Left ventricle myocardium superior (tissue), 1 donor: ENCODE measurements at regions of chrX and their contacts with region 1.

Region 1: GRCh38 chrX:15564981-15565579 is 35.7 kb downstream of the ACE2 start:
- DNase-seq: peak; percentile 63
- ATAC-seq: peak; percentile 91

Region 2: DNA sequence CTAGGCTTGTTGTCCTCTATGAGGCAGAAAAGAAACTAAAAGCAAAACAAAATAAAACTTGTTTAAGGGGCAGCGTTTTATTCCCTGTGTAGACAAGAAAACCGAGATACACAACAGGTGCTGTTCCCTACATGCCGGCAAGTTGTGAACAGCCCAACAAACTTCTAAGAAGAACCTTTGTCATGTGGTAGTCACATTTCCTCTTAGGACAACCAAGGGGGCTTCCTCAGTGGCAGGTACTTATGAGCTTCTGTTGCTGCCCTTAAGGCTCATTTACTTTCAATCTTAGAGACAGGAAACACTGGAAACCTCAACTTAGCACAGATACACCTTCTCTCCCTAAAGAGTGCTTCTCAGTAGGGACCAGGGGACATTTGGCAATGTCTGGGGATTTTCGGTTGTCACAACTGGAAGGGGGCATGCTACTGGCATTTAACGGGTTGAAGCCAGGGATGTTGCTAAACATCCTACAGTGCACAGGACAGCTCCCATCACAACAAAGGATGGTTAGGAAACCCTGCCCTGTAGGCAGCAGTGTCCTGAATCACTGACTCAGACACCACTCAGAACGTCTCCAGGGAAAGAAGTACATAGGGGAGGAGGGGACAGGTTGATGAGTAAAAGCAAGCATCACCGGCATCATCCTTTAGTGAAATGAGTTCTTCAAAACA is 406.2 kb before region 1 on chrX:
- intact Hi-C with region 1: no loop called
- DNase-seq: no peak
- ATAC-seq: no peak

Region 3: GRCh38 chrX:15493118-15493962 is 71.7 kb before region 1 on chrX and contains the start of gene PIR:
- intact Hi-C with region 1: loop called (anchors 10 kb)
- DNase-seq: peak; percentile 91
- ATAC-seq: peak; percentile 100
- total RNA-seq, gene PIR: 12.0 TPM

Region 4: DNA sequence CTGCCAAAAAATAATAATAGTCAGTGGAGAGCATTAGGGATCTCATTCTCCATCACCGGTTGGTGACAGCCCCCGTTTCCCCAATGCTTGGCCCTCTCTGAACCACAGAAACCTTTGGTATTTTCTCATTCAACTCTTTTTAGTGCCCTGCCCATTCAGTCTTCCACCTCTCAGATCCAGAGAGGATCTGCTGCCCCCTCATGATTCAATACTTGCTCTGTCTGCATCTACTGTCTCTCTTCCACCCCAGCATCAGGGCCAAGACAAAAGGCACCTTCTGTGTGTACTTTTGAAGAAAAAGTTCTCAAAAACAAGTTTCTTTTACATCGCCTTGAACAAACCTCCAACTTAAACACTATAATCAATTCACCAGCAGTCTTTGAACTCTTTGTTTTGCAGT is 80.2 kb after region 1 on chrX:
- intact Hi-C with region 1: no loop called
- DNase-seq: no peak
- ATAC-seq: peak; percentile 26